Endothelial cell of umbilical vein (primary cell): ENCODE measurements at regions of chr2 and their contacts with region 1.

Region 1: GRCh38 chr2:182650704-182651103 is 65.4 kb upstream of the DNAJC10 start:
- DNase-seq: peak; percentile 67
- H3K4me3 ChIP-seq: no peak overlapping the region
- H3K27ac ChIP-seq: no peak overlapping the region
- H3K4me1 ChIP-seq: no peaks in the 10 kb centered on the region
- H3K27me3 ChIP-seq: no peaks in the 10 kb centered on the region
- CTCF ChIP-seq: peak; percentile 15 to 30
- POLR2A ChIP-seq: no peak

Region 2: GRCh38 chr2:181573140-181573736 is 1077.5 kb before region 1 on chr2:
- CTCF ChIA-PET with region 1: interaction called, 7 read pairs
- POLR2A ChIA-PET with region 1: no interaction called
- dilution Hi-C with region 1: no loop called
- intact Hi-C with region 1: loop called (anchors 2 kb)
- DNase-seq: peak; percentile 38
- H3K4me3 ChIP-seq: no peak overlapping the region
- H3K27ac ChIP-seq: no peak overlapping the region
- H3K4me1 ChIP-seq: no peaks in the 10 kb centered on the region
- H3K27me3 ChIP-seq: peaks cover 4 to 12% of the 10 kb centered on the region in 2 experiments
- CTCF ChIP-seq: peak; percentile 18 to 31
- POLR2A ChIP-seq: no peak

Region 3: DNA sequence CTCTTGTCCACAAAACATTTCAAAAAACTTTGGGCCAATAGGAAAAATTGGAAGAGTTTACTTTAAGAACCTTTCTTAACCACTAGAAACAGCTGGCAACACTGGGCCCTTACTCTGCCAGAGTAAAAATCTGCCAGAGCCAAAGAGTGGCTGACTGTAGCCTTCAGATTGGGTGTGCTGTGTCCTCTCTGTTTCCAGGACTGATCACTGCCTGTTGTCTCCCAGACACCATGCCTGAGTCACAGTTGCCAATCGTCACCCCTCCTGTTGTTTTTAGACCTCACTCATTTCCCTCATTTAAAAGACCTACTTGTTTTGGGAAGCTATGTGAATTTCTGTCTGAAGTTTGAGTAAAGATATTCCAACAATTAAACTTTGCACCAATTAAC is 505.9 kb before region 1 on chr2:
- CTCF ChIA-PET with region 1: interaction called, 10 read pairs
- POLR2A ChIA-PET with region 1: no interaction called
- dilution Hi-C with region 1: no loop called
- intact Hi-C with region 1: no loop called
- DNase-seq: peak; percentile 84
- H3K4me3 ChIP-seq: no peak overlapping the region
- H3K27ac ChIP-seq: peak overlapping the region; percentile 91
- H3K4me1 ChIP-seq: peaks cover 17% of the 10 kb centered on the region
- H3K27me3 ChIP-seq: no peaks in the 10 kb centered on the region
- CTCF ChIP-seq: no peak
- POLR2A ChIP-seq: no peak

Region 4: DNA sequence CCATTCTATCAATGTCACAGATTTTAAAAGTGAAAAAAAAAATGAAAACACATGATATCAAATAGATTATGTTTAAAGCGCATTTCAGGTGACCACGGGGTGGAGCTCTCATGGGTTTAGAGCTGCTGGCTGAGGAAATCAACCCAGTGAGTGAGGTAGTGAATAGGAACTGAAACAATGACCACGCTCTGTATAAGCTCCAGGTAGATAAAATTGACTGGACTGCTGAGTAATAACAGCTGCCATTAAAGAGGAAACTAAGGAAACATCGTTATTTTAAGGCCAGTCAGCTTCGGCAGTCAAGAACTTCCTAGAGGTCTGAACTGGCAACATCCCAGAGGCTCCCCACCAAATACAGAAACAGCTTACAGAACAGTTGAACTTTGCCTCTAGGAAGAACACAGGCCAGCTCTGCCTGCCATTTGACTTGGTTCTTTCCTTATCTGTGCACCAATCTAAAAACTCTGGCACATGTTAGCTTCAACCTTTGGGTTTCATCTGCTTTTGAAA is 409.8 kb before region 1 on chr2:
- CTCF ChIA-PET with region 1: interaction called, 76 read pairs
- POLR2A ChIA-PET with region 1: no interaction called
- dilution Hi-C with region 1: no loop called
- intact Hi-C with region 1: loop called (anchors 1 kb)
- DNase-seq: peak; percentile 69
- H3K4me3 ChIP-seq: no peak overlapping the region
- H3K27ac ChIP-seq: no peak overlapping the region
- H3K4me1 ChIP-seq: peaks cover 4% of the 10 kb centered on the region
- H3K27me3 ChIP-seq: no peaks in the 10 kb centered on the region
- CTCF ChIP-seq: peak; percentile 25 to 36
- POLR2A ChIP-seq: no peak

Region 5: DNA sequence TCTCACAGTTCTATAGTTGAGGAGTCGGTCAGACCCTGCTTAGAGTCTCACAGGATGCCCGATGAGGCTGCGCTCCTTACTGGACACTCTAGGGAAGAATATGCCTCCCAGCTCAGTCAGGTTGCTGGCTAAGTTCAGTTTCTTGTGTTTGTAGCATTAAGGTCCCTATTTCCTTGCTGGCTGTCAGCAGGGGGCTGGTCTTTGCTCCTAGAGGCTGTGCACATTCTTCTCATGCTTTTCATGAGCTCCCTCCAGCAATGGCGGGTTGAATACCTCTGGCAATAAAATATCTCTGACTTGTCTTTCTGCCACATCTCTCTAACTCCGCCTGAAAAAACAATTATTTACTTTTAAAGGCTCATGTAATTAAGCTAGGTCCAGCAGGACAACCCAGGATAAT is 14.0 kb before region 1 on chr2:
- CTCF ChIA-PET with region 1: interaction called, 10 read pairs
- POLR2A ChIA-PET with region 1: no interaction called
- dilution Hi-C with region 1: no loop called
- intact Hi-C with region 1: no loop called
- DNase-seq: no peak
- H3K4me3 ChIP-seq: no peak overlapping the region
- H3K27ac ChIP-seq: no peak overlapping the region
- H3K4me1 ChIP-seq: no peaks in the 10 kb centered on the region
- H3K27me3 ChIP-seq: no peaks in the 10 kb centered on the region
- CTCF ChIP-seq: no peak
- POLR2A ChIP-seq: no peak

Region 6: DNA sequence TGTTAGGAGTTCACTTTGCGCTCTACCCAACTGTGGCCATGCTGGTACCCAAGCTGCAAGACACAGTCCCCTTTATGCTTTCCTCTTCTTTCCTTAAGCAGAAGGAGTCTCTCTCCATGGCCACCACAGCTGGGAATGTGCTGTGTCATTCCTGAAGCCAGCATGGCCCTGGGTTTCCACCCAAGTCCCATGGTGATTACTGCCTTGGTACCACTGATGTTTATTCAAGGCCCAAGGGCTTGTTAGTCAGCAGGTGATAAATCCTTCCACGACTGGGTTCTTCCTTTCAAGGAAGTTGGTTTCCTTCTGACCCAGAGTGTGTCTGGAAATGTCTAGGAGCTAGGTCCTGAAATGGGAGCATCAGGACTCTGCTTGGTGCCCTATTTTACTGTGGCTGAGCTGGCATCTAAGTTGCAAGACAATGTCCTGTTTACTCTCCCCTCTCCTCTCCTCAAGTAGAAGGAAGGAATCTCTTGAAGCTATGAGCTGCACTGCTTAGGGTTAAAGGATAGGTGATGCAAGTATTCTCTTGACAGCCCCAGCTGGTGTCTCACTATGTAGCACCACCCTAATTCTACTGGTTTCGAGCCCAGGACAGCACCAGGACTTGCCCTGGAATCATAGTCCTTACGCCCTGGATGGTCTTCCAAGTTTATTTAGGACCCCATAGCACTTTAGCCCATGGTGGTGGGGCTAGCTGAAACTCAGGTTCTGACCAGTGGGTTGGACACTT is 454.9 kb after region 1 on chr2:
- CTCF ChIA-PET with region 1: no interaction called
- POLR2A ChIA-PET with region 1: no interaction called
- dilution Hi-C with region 1: no loop called
- intact Hi-C with region 1: no loop called
- DNase-seq: no peak
- H3K4me3 ChIP-seq: no peak overlapping the region
- H3K27ac ChIP-seq: no peak overlapping the region
- H3K4me1 ChIP-seq: no peaks in the 10 kb centered on the region
- H3K27me3 ChIP-seq: no peaks in the 10 kb centered on the region
- CTCF ChIP-seq: no peak
- POLR2A ChIP-seq: no peak